ENCODE measurements at regions of chr9 and their contacts with region 1.

Region 1: GRCh38 chr9:124708633-124709291 is 62.3 kb downstream of the NR6A1 start:
- DNase-seq: no peak
- ATAC-seq: no peak
- H3K4me3 ChIP-seq: no peak overlapping the region
- H3K4me3 Mint-ChIP-seq: no peak overlapping the region
- H3K27ac ChIP-seq: no peak overlapping the region
- H3K27ac Mint-ChIP-seq: no peak overlapping the region
- H3K4me1 ChIP-seq: no peaks in the 10 kb centered on the region
- H3K4me1 Mint-ChIP-seq: peaks cover 0 to 1% (median 0%) of the 10 kb centered on the region in 3 donors
- H3K27me3 ChIP-seq: peaks cover 0 to 6% of the 10 kb centered on the region in 2 experiments
- H3K27me3 Mint-ChIP-seq: peaks cover 16 to 18% of the 10 kb centered on the region in 2 donors

Region 2: GRCh38 chr9:124164811-124165210 is 544.0 kb before region 1 on chr9:
- CTCF ChIA-PET with region 1: no interaction called
- POLR2A ChIA-PET with region 1: no interaction called
- DNase-seq: no peak
- ATAC-seq: no peak
- H3K4me3 ChIP-seq: no peak overlapping the region
- H3K4me3 Mint-ChIP-seq: no peak overlapping the region
- H3K27ac ChIP-seq: no peak overlapping the region
- H3K27ac Mint-ChIP-seq: no peak overlapping the region
- H3K4me1 ChIP-seq: no peaks in the 10 kb centered on the region
- H3K4me1 Mint-ChIP-seq: no peaks in the 10 kb centered on the region
- H3K27me3 ChIP-seq: peaks cover 0 to 2% of the 10 kb centered on the region in 2 experiments
- H3K27me3 Mint-ChIP-seq: peaks cover 13 to 22% of the 10 kb centered on the region in 2 donors

Region 3: GRCh38 chr9:124574534-124575341 is 134.0 kb before region 1 on chr9:
- CTCF ChIA-PET with region 1: no interaction called
- POLR2A ChIA-PET with region 1: no interaction called
- DNase-seq: no peak
- ATAC-seq: no peak
- H3K4me3 ChIP-seq: no peak overlapping the region
- H3K4me3 Mint-ChIP-seq: no peak overlapping the region
- H3K27ac ChIP-seq: no peak overlapping the region
- H3K27ac Mint-ChIP-seq: no peak overlapping the region
- H3K4me1 ChIP-seq: no peaks in the 10 kb centered on the region
- H3K4me1 Mint-ChIP-seq: no peaks in the 10 kb centered on the region
- H3K27me3 ChIP-seq: peaks cover 0 to 8% of the 10 kb centered on the region in 2 experiments
- H3K27me3 Mint-ChIP-seq: peaks cover 6 to 15% of the 10 kb centered on the region in 2 donors

Region 4: DNA sequence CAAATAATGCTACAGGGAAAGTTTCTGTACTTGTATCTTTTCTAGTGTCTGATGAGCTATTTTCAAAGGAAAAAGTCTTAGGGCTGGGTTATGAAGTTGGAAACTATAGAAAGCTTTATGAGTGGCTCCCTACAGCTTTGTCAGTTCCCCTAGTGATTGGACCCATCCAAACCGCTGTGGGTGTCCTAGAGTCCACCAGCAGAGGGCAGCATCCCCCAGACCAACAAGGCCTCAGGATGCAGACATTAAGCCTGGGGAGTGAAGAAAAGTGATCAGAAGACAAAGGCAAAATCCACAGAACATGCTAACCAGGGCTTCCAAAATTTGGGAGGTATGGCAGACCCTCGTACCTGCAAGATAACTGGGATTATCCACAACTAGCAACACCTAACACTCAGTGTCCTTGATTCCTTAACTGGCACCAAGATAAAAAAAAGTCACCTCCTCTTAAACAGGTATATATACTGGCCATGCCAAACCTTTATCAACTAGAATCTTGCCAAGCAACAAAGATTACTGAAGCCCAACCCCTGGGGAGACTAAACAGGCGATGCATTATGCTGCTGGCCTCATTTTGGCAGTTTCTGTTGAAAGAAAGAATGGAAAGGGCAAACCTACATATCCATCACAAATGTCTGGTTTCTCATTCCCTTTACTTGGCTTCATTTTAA is 91.2 kb before region 1 on chr9:
- CTCF ChIA-PET with region 1: interaction called, 5 to 12 read pairs
- POLR2A ChIA-PET with region 1: no interaction called
- DNase-seq: peak; percentile 32 to 82 (median 62)
- ATAC-seq: peak; percentile 61 to 76 (median 66)
- H3K4me3 ChIP-seq: no peak overlapping the region
- H3K4me3 Mint-ChIP-seq: no peak overlapping the region
- H3K27ac ChIP-seq: no peak overlapping the region
- H3K27ac Mint-ChIP-seq: no peak overlapping the region
- H3K4me1 ChIP-seq: peaks cover 0 to 4% of the 10 kb centered on the region in 2 experiments
- H3K4me1 Mint-ChIP-seq: no peaks in the 10 kb centered on the region
- H3K27me3 ChIP-seq: peaks cover 0 to 8% of the 10 kb centered on the region in 2 experiments
- H3K27me3 Mint-ChIP-seq: peaks cover 5 to 7% of the 10 kb centered on the region in 2 donors

Region 5: DNA sequence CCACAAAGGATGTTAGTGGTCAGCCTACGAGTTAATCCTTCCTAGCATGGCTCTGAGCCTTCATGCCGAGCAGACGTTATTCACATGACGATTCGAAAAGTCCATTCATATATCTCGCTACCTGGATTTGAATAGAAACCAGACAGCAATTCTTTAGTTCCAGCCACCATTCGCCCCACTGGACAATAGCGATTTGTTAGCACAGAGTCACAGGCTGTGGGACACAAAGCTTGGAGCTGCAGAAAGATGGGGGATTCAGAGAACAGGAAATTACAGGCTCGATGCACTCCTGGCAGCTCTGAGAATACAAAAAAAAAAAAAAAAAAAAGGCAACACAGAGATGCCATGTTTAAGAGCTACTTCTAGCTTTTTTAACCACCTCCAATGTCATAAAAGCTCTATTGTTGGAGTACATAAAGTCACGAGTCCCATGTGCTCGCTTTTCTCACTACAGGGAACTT is 48.4 kb before region 1 on chr9:
- CTCF ChIA-PET with region 1: interaction called in 1 of 2 experiments, 10 read pairs
- POLR2A ChIA-PET with region 1: no interaction called
- DNase-seq: peak in 3 of 35 experiments; percentile 2 to 24 (median 7)
- ATAC-seq: no peak
- H3K4me3 ChIP-seq: peak overlapping the region; percentile 34 to 58
- H3K4me3 Mint-ChIP-seq: peak overlapping the region; percentile 67 to 88 (median 88)
- H3K27ac ChIP-seq: no peak overlapping the region
- H3K27ac Mint-ChIP-seq: peak overlapping the region in 1 of 2 donors; percentile 61
- H3K4me1 ChIP-seq: peaks cover 6 to 14% of the 10 kb centered on the region in 2 experiments
- H3K4me1 Mint-ChIP-seq: peaks cover 28 to 35% (median 31%) of the 10 kb centered on the region in 3 donors
- H3K27me3 ChIP-seq: peaks cover 0 to 8% of the 10 kb centered on the region in 2 experiments
- H3K27me3 Mint-ChIP-seq: peaks cover 3 to 16% of the 10 kb centered on the region in 2 donors

Region 6: GRCh38 chr9:124697326-124698200 is 11.2 kb before region 1 on chr9:
- CTCF ChIA-PET with region 1: interaction called in 1 of 2 experiments, 10 read pairs
- POLR2A ChIA-PET with region 1: no interaction called
- DNase-seq: no peak
- ATAC-seq: no peak
- H3K4me3 ChIP-seq: no peak overlapping the region
- H3K4me3 Mint-ChIP-seq: no peak overlapping the region
- H3K27ac ChIP-seq: no peak overlapping the region
- H3K27ac Mint-ChIP-seq: no peak overlapping the region
- H3K4me1 ChIP-seq: peaks cover 0 to 7% of the 10 kb centered on the region in 2 experiments
- H3K4me1 Mint-ChIP-seq: peaks cover 0 to 2% (median 0%) of the 10 kb centered on the region in 3 donors
- H3K27me3 ChIP-seq: no peaks in the 10 kb centered on the region
- H3K27me3 Mint-ChIP-seq: no peaks in the 10 kb centered on the region